Motor neuron (in vitro differentiated cells): ENCODE measurements at regions of chr6 and their contacts with region 1.

Region 1: DNA sequence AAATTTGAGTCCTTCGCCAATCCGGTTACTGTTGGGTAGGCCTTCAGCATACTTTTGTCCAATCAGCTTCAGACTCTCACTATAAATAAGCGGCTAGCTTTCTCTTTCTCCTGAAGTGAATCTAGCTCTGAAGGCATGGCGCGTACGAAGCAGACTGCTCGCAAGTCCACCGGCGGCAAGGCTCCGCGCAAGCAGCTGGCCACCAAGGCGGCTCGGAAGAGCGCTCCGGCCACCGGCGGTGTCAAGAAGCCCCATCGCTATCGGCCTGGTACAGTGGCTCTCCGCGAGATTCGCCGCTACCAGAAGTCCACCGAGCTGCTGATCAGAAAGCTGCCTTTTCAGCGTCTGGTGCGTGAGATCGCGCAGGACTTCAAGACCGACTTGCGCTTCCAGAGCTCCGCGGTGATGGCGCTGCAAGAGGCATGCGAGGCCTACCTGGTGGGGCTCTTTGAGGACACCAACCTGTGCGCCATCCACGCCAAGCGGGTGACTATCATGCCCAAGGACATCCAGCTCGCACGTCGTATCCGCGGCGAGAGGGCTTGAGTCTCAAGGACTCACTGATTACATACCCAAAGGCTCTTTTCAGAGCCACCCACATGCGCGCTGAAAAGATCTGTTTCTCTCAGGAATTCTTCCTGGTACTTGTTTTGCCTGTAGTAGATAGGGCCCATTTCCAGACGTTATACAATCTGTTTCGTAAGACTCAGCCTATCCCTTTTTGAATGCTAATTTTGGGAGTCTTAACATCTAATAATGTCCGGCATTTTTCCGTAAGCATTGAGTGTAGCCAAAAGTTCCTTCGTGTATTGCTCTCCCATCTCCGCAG is 102.0 kb downstream of the OR2B2 start:
- ATAC-seq: peak; percentile 32 to 61 (median 55)
- H3K4me3 ChIP-seq: peak overlapping the region; percentile 45 to 91 (median 60)
- H3K27ac ChIP-seq: peak overlapping the region; percentile 12 to 29
- H3K4me1 ChIP-seq: peaks cover 9 to 11% of the 10 kb centered on the region in 2 donors

Region 2: DNA sequence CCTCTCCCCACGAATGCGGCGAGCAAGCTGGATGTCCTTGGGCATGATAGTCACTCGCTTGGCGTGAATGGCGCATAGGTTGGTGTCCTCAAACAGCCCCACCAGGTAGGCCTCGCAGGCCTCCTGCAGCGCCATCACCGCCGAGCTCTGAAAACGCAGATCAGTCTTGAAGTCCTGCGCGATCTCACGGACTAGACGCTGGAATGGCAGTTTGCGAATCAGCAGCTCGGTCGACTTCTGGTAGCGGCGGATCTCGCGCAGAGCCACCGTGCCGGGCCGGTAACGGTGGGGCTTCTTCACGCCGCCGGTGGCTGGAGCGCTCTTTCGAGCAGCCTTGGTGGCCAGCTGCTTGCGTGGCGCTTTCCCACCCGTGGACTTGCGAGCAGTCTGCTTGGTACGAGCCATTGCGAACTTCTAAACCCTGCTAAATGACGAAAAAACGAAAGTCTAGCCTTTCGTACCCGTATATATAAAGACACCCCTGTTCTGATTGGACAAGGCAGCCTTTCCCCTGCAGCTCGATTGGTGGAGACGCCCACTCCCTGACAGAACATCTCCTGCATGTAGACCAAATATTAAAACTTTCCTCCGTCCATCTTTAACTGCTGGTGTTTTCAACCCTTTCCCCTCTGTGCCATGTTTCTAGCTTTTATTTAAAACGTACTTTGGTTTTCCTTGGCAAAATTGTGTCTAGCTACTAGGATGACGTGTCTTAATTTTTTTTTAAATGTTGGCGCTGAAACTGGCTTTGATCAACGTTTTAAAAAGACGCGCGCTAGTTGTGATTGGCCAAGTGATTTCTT is 1613.1 kb before region 1 on chr6:
- in situ Hi-C with region 1: loop called in 2 of 9 experiments (anchors 25 kb)
- ATAC-seq: peak; percentile 39 to 63 (median 54)
- H3K4me3 ChIP-seq: peak overlapping the region; percentile 62 to 96 (median 83)
- H3K27ac ChIP-seq: peak overlapping the region in 1 of 2 donors; percentile 12
- H3K4me1 ChIP-seq: peaks cover 0 to 10% of the 10 kb centered on the region in 2 donors

Region 3: GRCh38 chr6:26204332-26205165 is 1605.6 kb before region 1 on chr6:
- in situ Hi-C with region 1: loop called in 2 of 9 experiments (anchors 25 kb)
- ATAC-seq: peak; percentile 75 to 87 (median 80)
- H3K4me3 ChIP-seq: peak overlapping the region; percentile 59 to 81 (median 71)
- H3K27ac ChIP-seq: peak overlapping the region; percentile 84 to 93
- H3K4me1 ChIP-seq: peaks cover 15 to 24% of the 10 kb centered on the region in 2 donors

Region 4: DNA sequence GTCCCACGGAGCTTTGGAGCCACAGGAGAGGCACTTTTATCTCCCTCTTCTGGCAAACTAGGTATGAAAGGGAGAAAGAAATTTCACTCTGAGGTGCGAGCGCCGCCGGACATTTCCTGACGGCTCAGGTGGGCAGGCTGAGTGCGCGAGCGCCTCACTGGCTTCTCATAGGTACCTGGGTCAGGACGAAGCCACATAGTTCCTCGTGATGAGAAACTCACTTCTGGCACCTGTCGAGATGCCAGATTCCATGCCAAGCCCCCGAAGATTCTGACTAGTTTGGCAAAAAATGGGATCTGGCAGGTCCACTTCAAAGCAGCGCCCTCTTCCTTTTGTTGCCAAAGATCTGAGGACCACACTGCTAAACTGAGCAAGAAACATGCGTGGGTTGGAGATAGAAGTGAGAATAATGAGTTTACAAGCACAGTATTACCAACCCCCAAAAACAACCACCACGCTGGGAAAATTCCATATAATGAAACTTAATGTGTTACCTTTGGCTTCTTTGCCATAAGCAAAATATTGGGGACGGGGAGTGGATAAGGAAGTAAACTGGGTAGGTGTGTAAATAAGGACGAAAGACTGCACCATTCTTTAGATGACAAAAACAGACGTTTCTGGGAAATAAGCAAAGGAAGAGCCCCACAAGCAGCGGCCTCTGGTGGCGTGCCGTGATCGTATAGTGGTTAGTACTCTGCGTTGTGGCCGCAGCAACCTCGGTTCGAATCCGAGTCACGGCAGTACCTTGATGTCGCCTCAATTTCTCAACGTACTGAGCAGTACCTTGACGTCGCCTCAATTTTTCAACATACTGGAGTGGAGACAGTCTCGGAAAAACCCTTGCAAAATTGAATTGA is 652.5 kb before region 1 on chr6:
- in situ Hi-C with region 1: loop called in 1 of 9 experiments (anchors 25 kb)
- ATAC-seq: peak; percentile 82 to 95 (median 92)
- H3K4me3 ChIP-seq: peak overlapping the region; percentile 4 to 41 (median 31)
- H3K27ac ChIP-seq: no peak overlapping the region
- H3K4me1 ChIP-seq: peaks cover 5% of the 10 kb centered on the region in 2 donors

Region 5: DNA sequence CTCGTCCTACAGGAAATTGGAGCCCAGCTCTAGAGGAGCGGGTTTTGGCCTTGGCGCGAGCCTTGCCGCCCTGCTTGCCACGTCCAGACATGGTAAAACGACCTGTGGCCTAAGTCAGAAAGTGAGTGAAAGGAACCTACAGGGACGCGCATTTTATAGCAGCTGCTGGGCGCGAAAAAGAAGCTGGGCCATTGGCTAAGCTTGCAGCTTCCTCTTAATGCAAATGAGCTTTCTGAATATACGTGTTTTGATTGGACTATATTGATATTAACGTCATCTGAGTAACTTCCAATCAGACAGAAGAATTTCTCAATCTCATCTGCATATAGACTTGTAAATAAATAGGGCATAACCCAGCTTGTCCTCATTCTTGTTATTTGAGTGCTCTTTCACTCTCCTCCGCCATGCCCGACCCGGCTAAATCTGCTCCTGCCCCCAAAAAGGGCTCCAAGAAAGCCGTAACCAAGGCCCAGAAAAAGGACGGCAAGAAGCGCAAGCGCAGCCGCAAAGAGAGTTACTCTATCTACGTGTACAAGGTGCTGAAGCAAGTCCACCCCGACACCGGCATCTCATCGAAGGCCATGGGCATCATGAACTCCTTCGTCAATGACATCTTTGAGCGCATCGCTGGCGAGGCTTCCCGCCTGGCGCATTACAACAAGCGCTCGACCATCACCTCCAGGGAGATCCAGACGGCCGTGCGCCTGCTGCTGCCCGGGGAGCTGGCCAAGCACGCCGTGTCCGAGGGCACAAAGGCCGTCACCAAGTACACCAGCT is 83.1 kb after region 1 on chr6:
- in situ Hi-C with region 1: loop called in 1 of 9 experiments (anchors 10 kb)
- ATAC-seq: peak; percentile 58 to 72 (median 66)
- H3K4me3 ChIP-seq: peak overlapping the region; percentile 54 to 95 (median 75)
- H3K27ac ChIP-seq: peak overlapping the region; percentile 58 to 67
- H3K4me1 ChIP-seq: peaks cover 16 to 17% of the 10 kb centered on the region in 2 donors

Region 6: GRCh38 chr6:28124102-28124970 is 314.2 kb after region 1 on chr6 and contains the start of gene ZSCAN16:
- in situ Hi-C with region 1: no loop called
- ATAC-seq: peak; percentile 99 to 100 (median 100)
- H3K4me3 ChIP-seq: peak within 1 kb of the TSS; percentile 55 to 96 (median 81)
- H3K27ac ChIP-seq: peak within 1 kb of the TSS; percentile 23 to 61
- H3K4me1 ChIP-seq: peaks cover 10 to 14% of the 10 kb centered on the region in 2 donors
- total RNA-seq, gene ZSCAN16: 1.6 to 19.7 (median 9.0) TPM